Cardiac septum (tissue), 1 donor: ENCODE measurements at regions of chr3 and their contacts with region 1.

Region 1: DNA sequence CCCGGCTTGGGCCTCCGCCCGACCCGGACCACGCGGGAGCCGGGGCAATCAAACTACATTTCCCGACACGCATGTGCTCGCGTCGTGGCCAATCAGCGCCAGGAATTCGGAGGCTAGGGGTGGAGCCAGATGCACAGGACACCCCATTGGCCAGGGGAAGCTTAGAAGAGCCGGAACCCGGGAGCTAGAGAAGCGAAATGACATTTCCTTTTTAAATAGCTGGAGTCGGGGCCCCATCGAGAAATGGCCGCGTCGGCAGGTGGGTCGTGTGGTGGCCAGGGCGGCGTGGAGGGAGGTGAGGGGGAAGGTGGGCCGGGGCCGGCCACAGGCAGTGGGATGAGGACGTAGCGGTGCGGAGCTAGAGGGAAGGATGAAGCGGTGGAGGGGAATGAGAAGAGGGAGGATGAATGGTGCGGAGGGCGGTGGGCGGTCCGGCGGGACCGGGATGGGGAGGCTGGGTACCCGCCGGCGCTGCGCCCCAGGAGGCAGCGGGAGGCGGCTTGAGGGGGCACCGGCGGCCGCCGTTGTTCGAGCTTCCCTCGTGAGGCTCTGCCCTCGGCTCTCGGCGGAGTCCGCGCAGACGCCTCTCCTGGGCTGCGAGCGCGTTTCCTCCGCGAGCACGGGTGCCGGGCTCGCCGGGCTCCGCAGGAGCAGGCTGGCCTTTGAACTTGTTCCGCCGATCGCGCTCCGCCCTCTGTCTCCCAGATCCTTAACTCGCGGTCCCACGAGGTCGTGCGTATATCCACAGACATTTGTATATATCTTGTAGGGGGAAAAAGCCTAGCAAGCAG is at the start of gene KBTBD8:
- DNase-seq: peak; percentile 99
- total RNA-seq, gene KBTBD8: 2.9 TPM

Region 2: DNA sequence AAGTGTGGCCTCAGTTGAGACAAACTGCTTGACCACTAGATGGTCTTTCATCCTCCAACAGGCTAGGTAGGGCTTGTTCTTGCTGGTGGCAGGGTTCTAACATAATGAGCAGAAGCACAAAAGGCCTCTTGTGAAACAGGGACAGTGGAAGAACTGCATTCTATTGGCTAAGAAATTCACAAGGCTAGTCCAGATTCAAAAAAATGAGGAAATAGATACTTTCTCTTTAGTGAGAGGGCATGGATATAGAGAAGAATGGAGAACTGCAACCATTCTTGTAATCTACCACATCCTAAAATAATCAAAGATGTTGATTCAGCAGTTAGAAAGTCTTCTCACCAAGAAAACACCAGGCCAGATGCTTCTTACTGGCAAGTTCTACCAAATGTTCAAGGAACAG is 353.8 kb before region 1 on chr3:
- intact Hi-C with region 1: no loop called
- DNase-seq: no peak

Region 3: GRCh38 chr3:67011414-67012131 is 13.3 kb after region 1 on chr3:
- intact Hi-C with region 1: no loop called
- DNase-seq: no peak

Region 4: DNA sequence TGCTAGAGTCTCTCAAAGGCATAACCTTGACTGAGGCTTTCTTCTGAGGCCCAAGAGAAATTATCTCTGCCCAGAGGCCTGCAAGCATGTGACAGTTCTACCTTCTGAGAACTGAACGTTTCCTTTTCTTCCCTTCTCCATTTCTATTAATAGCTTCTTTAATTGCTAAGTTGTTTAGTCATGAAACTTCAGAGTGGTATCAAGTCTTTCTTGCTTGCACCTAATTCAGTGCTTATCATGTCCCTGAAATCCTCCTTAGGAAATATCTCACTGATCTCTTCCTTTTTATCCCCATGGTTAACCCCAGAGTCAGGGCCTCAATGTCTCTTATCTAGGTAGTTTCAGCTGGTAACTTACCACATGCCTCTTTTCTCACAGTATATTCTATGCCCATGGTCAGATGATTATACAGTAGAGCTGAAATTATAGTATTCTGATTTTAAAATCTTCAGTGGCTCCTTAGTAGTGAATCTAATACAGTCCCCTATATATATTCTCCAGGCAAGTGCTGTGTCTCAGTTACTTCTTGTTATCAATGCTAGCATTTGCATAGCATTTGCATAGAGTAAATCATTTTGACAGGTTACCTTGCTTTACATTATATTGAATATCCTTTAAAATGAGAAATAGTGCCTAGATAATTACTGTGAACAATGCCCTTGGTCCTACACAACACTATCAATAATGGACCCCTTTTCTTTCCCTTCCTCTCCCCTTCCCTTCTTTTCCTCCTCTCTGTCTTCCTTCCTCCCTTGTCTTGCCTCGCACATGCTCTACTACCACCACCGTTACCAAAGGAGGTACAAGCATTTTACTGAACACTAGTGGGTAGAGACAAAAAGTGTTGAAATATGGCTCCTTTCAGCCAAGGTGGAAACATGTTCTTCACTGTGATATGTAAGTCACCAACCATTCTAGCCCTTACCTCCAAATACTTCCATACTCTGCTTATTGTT is 32.8 kb after region 1 on chr3:
- intact Hi-C with region 1: loop called (anchors 5 kb)
- DNase-seq: no peak

Region 5: GRCh38 chr3:67067251-67067650 is 68.9 kb after region 1 on chr3:
- intact Hi-C with region 1: no loop called
- DNase-seq: no peak

Region 6: GRCh38 chr3:67654099-67654843 is 656.0 kb after region 1 on chr3 and contains the start of gene SUCLG2:
- intact Hi-C with region 1: loop called (anchors 10 kb)
- DNase-seq: peak; percentile 96
- total RNA-seq, gene SUCLG2: 62.5 TPM